ENCODE measurements at regions of chr4 and their contacts with region 1.

Region 1: DNA sequence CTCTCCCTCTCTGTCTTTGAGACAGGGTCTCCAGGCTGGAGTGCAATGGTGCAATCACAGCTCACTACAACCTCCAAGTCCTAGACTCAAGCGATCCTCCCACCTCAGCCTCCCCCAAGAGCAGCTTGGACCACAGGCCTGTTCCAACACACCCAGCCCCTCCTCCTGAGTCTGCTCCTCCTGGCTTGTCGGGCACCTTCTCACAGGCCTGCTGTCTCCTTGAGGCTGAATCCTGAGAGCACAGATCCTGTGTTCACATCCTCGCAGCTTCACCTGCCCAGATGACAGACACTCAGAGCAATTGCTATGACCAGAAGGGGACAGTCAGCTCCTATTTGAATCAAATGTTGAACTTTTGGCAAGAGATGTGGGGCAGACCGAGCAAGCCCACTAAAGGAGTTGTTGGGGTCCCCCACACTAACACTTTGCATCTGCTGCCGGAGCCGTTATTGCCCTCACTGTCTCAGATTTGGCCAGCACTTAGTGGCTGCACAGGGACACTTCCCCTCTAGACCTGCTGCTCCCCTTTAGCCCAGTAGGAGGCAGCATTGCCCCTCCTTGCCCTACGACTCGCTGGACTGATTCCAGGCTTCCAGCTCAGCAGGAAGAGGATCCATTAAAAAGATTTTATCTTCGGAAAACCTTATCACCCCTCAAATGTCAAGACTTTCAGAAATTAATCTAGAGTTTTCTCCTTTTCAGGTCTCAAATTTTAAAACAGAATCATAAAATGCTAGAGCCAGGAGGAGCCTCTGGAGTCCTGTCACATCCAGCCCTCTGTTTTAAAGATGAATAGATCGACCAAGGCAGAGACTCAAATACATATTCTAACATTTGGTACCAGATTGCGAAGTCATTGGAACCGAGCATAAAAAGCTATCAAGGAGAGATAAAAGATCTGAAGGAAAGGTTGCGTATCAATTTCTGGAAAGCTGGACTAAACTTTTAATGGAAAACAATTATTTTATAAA is 113.7 kb downstream of the USP46 start:
- DNase-seq: peak; percentile 82 to 88
- ATAC-seq: peak; percentile 92
- H3K4me3 ChIP-seq: no peak overlapping the region
- H3K27ac ChIP-seq: no peak overlapping the region
- H3K4me1 ChIP-seq: no peaks in the 10 kb centered on the region
- H3K27me3 ChIP-seq: no peaks in the 10 kb centered on the region

Region 2: DNA sequence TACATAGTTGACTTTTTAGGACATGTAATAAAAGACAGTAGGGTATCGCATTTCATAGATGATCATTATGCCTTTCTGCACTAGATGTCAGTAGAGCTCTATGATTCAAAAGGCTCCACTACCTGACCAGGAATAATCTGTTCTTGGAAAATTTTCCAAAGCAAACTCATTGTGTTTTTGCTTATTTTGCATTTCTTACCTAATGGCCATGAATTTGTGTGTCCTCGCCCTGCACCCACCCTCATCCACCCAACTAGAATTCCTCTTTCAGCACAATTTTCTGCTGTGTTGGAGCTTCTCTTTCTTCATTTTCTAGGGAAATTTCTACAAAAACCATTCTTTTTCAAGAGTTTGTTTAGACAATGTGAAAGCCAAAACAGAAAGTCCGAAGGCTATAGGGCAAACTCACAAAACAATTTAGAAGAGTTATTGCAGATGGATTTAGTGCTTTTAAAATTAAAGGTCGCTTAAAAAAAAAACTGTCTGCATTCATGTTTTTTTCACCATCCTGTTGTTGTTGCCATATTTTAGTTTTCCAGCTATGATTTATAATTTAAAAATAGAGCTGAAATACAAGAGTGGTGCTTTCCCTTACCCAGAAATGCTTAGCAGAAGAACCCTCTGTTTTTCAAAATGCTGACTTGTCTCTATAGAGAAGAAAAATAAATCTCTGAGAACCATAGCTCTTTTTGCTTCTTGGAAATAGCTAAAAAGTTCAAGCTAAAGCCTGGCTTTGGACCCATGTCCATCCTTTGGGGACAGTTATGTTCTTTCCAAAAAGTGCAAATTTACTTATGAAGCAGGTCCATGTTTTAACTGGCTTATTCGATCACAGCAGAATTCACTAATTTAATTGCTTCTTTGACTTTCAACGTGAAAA is 310.6 kb before region 1 on chr4:
- intact Hi-C with region 1: loop called in 1 of 2 experiments (anchors 10 kb)
- DNase-seq: no peak
- ATAC-seq: peak; percentile 84
- H3K4me3 ChIP-seq: peak overlapping the region in 1 of 2 donors; percentile 41
- H3K27ac ChIP-seq: no peak overlapping the region
- H3K4me1 ChIP-seq: no peaks in the 10 kb centered on the region
- H3K27me3 ChIP-seq: no peaks in the 10 kb centered on the region

Region 3: GRCh38 chr4:52376132-52376704 is 169.2 kb before region 1 on chr4:
- intact Hi-C with region 1: loop called (anchors 5 kb)
- DNase-seq: no peak
- ATAC-seq: no peak
- H3K4me3 ChIP-seq: no peak overlapping the region
- H3K27ac ChIP-seq: no peak overlapping the region
- H3K4me1 ChIP-seq: no peaks in the 10 kb centered on the region
- H3K27me3 ChIP-seq: no peaks in the 10 kb centered on the region

Region 4: DNA sequence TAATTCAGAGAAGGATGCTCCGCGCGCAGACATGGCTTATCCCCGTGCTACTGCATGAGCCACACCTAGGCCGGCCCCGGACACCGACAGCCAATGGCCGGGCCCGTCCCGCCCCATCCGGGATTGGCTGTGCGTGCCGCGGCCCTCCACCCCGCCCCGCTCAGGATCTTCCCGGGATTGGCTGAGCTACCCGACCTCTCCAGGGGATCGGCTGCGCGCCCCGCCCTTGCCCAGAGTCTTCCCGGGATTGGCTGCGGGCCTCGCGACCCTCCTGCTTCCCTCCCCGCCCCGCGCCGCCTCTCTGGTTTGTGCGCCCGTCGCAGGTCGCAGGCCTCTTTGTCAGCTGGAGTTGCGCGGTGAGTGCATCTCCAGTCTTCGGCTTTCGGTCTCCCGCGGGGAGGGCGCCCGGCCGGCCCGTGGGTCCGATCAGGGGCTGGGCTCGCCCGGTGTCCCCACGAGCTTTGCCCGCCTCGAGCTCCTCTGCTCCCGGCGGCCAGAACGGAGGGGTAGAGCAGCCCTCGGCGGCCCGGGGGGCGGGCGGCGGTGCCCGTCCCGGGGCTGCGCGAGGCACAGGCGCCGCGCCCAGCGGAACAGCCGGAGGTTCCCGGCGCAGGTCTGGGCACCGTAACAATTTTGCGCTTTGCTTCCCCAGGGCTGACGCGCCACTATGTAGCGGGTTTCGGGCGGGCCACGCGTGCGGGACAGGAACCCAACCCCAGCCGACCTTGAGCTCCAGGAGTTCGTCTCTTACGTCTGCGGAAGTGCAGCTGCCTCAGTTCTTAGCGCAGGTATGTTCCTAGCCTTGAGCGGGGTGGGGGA is 167.0 kb after region 1 on chr4:
- intact Hi-C with region 1: loop called in 1 of 2 experiments (anchors 5 kb)
- DNase-seq: peak; percentile 99
- ATAC-seq: peak; percentile 99
- H3K4me3 ChIP-seq: peak overlapping the region; percentile 78 to 82
- H3K27ac ChIP-seq: peak overlapping the region; percentile 88 to 89
- H3K4me1 ChIP-seq: peaks cover 0 to 3% of the 10 kb centered on the region in 2 donors
- H3K27me3 ChIP-seq: no peaks in the 10 kb centered on the region

Region 5: DNA sequence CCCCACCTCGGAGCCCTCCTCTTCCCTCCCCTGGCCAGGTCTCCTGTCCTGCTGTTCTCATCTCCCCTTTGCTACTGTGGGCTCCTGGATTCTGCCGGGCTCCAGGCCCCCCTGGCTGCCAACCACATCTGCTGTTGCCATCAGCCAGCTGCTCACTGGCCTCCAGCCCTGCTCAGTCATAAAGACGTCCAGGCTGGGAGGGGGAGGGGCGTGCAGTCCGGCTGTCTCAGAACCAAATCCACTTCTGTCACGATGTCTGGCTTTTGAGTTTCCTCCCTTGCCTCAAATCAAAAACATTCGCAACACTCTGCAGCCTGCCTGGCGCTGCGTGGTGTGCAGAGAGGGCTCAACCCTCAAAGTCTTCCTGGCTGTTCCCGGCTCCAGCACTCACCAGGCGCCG is 323.8 kb after region 1 on chr4:
- intact Hi-C with region 1: loop called (anchors 5 kb)
- DNase-seq: peak; percentile 86 to 87
- ATAC-seq: peak; percentile 72
- H3K4me3 ChIP-seq: no peak overlapping the region
- H3K27ac ChIP-seq: peak overlapping the region; percentile 18 to 46
- H3K4me1 ChIP-seq: peaks cover 0 to 12% of the 10 kb centered on the region in 2 donors
- H3K27me3 ChIP-seq: no peaks in the 10 kb centered on the region